ENCODE measurements at regions of chr1 and their contacts with region 1.

Region 1: DNA sequence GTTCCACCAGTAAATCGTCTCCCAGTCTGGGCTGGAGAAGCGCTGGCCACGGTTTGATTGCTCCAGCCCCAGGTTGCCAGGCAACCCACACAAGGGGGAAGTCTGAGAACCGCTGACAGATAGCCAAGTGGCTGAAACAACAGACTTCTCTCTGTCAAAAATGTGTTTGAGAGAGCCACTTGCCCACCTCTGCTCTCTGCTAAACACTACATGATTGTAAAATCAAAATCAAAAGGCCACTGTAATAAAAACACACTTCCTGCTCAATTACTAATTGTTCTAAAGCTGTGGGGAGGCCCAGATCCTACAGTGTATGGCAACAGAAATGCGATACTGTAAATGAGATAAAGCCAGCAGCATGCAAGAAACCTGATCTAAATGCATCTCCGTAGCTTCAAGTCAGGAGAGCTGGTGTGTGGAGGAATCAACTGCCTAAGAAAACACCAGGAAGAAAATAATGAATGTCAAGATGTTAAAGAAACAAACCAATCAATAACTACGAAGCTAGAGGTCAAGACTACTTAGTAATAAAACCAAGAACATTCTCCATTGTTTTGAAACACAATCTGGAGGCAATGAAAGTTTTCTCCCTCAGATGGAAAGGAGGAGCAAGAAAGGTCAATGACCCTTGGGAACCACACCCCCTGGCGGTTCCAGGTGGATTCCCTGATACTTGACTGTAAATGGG is 121.2 kb downstream of the SLC45A1 start:
- DNase-seq: peak; percentile 72
- ATAC-seq: peak; percentile 42
- H3K4me3 Mint-ChIP-seq: peak overlapping the region; percentile 15; the same call in 1 of the 2 replicates
- H3K27ac Mint-ChIP-seq: peak overlapping the region; percentile 93
- H3K4me1 Mint-ChIP-seq: peaks cover 67% of the 10 kb centered on the region
- H3K27me3 Mint-ChIP-seq: no peaks in the 10 kb centered on the region
- CTCF ChIP-seq: peak; percentile 35; the same call in 1 of the 2 replicates

Region 2: DNA sequence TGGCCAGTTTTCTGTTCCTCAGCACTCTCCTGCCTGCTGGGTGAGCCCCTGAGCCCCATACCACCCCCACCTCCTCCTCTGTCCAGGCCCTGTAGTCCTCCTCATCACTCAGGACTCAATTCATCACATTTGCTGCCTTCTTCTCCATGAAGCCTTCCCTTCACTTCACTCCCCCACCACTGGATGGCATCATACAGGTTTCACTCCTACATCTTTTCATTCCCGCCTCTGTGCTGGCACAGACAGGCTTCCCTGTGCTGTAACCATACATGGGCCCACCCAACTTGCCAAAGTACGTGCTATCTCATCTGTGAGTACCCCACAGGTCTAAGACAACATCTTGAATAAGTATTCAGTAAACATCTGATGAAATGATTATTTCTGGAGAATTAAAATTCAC is 64.3 kb before region 1 on chr1:
- CTCF ChIA-PET with region 1: interaction called, 12 read pairs
- POLR2A ChIA-PET with region 1: no interaction called
- DNase-seq: peak; percentile 65
- ATAC-seq: peak; percentile 30
- H3K4me3 Mint-ChIP-seq: no peak overlapping the region
- H3K27ac Mint-ChIP-seq: peak overlapping the region; percentile 9
- H3K4me1 Mint-ChIP-seq: peaks cover 88% of the 10 kb centered on the region
- H3K27me3 Mint-ChIP-seq: no peaks in the 10 kb centered on the region
- CTCF ChIP-seq: peak; percentile 35; the same call in 1 of the 2 replicates

Region 3: GRCh38 chr1:8409106-8409505 is 30.1 kb before region 1 on chr1:
- CTCF ChIA-PET with region 1: interaction called, 23 read pairs
- POLR2A ChIA-PET with region 1: no interaction called
- DNase-seq: no peak
- ATAC-seq: peak; percentile 70
- H3K4me3 Mint-ChIP-seq: no peak overlapping the region
- H3K27ac Mint-ChIP-seq: peak overlapping the region; percentile 85
- H3K4me1 Mint-ChIP-seq: peaks cover 70% of the 10 kb centered on the region
- H3K27me3 Mint-ChIP-seq: no peaks in the 10 kb centered on the region
- CTCF ChIP-seq: no peak

Region 4: GRCh38 chr1:8423650-8424538 is 15.3 kb before region 1 on chr1:
- CTCF ChIA-PET with region 1: interaction called, 22 read pairs
- POLR2A ChIA-PET with region 1: interaction called, 3 read pairs
- DNase-seq: peak; percentile 75
- ATAC-seq: peak; percentile 76
- H3K4me3 Mint-ChIP-seq: peak overlapping the region; percentile 66
- H3K27ac Mint-ChIP-seq: peak overlapping the region; percentile 96
- H3K4me1 Mint-ChIP-seq: peaks cover 25% of the 10 kb centered on the region
- H3K27me3 Mint-ChIP-seq: no peaks in the 10 kb centered on the region
- CTCF ChIP-seq: no peak

Region 5: GRCh38 chr1:8463144-8463927 is 24.2 kb after region 1 on chr1:
- CTCF ChIA-PET with region 1: interaction called, 10 read pairs
- POLR2A ChIA-PET with region 1: no interaction called
- DNase-seq: no peak
- ATAC-seq: 0 out of 2 replicates have a peak, but pooled peaks have one; percentile 5
- H3K4me3 Mint-ChIP-seq: peak overlapping the region; percentile 11; the same call in 1 of the 2 replicates
- H3K27ac Mint-ChIP-seq: peak overlapping the region; percentile 96
- H3K4me1 Mint-ChIP-seq: peaks cover 81% of the 10 kb centered on the region
- H3K27me3 Mint-ChIP-seq: no peaks in the 10 kb centered on the region
- CTCF ChIP-seq: no peak